ENCODE measurements at regions of chr1 and their contacts with region 1.

Region 1: DNA sequence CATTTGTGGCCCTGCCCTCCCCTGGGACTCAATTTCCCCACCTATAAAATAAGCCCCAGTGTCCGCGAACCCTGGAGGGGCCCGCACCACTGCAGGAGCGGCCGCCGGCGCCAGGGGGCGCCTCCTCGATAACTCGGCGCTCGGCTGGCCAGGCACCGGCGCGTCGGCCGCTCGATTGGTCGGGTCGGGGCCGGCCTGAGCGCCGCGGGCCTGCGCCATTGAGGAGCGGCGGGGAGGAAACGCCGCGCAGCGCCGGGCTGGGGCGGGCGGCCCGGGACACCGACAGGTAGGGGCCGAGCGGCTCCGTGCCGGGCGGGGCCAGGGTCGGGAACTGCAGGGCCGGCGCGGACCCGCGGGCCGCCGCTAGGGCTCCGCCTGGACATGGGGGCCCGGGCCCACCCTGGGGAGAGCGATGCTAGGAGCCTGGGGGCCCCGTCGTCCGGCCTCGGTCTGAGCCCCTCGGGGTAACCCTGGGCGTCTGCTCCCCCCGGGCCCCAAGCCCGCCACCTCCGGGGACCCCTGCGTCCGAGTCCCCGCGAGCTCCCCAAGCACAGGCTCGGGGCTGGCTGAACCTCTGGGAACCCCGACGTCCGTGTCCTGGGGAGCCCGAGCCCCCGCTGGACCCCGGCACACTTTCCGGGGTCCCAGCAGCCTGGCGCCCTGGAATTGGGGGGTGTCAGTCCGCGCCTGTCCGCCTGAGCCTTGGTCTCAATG is at the start of gene VPS13D:
- DNase-seq: peak; percentile 77 to 88 (median 80)
- H3K4me3 ChIP-seq: peak within 1 kb of the TSS; percentile 91
- H3K4me3 Mint-ChIP-seq: peak within 1 kb of the TSS; percentile 89 to 95 (median 90)
- H3K27ac ChIP-seq: peak within 1 kb of the TSS; percentile 86
- H3K27ac Mint-ChIP-seq: peak within 1 kb of the TSS; percentile 47 to 92 (median 87)
- H3K4me1 ChIP-seq: peaks cover 21% of the 10 kb centered on the region
- H3K4me1 Mint-ChIP-seq: peaks cover 24 to 34% (median 27%) of the 10 kb centered on the region in 3 donors
- H3K27me3 ChIP-seq: no peaks in the 10 kb centered on the region
- H3K27me3 Mint-ChIP-seq: no peaks in the 10 kb centered on the region
- total RNA-seq, gene VPS13D: 24.1 to 28.5 TPM

Region 2: DNA sequence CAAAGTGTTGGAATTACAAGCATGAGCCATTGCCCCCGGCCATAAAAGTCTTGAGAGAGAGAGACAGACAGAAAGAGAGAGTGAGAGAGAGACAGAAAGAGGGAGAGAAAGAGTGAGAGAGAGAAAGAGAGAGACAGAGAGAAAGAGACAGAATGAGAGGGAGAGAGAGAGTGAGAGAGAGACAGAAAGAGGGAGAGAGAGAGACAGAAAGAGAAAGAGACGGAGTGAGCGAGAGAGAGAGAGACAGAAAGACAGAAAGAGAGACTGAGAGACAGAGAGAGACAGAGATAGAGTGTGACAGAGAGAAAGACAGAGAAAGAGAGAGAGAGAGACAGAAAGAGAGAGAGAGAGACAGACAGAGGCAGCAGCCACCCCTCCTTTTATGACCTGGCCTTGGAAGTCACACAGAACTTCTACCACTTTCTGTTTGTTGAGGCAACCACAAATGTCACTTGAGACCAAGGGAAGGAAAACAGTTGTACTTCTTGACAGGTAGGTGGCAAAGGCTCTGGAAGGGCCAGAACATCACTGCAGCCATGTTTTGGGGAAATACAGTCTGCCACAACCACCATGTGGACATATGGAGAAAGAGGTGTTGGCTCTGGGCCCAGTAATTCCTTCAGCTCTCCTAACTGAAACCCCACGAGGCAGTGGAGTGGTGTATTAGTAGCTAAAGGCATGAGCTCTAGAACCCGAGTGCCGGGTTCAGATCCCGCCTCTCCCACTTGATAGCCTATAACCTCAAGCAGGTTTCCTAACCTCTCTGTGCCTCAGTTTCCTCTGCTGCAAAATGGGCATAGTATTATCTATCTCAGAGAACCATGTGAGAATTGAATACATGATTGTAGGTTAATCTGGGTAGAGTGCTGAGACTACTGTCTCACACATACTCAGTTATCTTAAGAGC is 116.3 kb before region 1 on chr1:
- CTCF ChIA-PET with region 1: interaction called, 10 read pairs
- POLR2A ChIA-PET with region 1: no interaction called
- DNase-seq: peak in 1 of 5 donors; percentile 11
- H3K4me3 ChIP-seq: no peak overlapping the region
- H3K4me3 Mint-ChIP-seq: no peak overlapping the region
- H3K27ac ChIP-seq: no peak overlapping the region
- H3K27ac Mint-ChIP-seq: peak overlapping the region in 3 of 8 donors; percentile 20 to 51 (median 33)
- H3K4me1 ChIP-seq: peaks cover 6% of the 10 kb centered on the region
- H3K4me1 Mint-ChIP-seq: peaks cover 8 to 10% (median 9%) of the 10 kb centered on the region in 3 donors
- H3K27me3 ChIP-seq: no peaks in the 10 kb centered on the region
- H3K27me3 Mint-ChIP-seq: no peaks in the 10 kb centered on the region

Measured in CD8-positive, alpha-beta memory T cell (primary cell).